ENCODE measurements at regions of chr15 and their contacts with region 1.

Region 1: GRCh38 chr15:60237421-60237820 is 160.4 kb downstream of the ANXA2 start:
- DNase-seq: no peak
- ATAC-seq: no peak
- H3K4me3 ChIP-seq: no peak overlapping the region
- H3K4me3 Mint-ChIP-seq: no peak overlapping the region
- H3K27ac ChIP-seq: no peak overlapping the region
- H3K27ac Mint-ChIP-seq: no peak overlapping the region
- H3K4me1 ChIP-seq: peaks cover 0 to 3% of the 10 kb centered on the region in 2 experiments
- H3K4me1 Mint-ChIP-seq: peaks cover 0 to 6% (median 5%) of the 10 kb centered on the region in 3 donors
- H3K27me3 ChIP-seq: peaks cover 0 to 10% of the 10 kb centered on the region in 2 experiments
- H3K27me3 Mint-ChIP-seq: peaks cover 50 to 53% of the 10 kb centered on the region in 2 donors

Region 2: GRCh38 chr15:58777107-58777506 is 1460.3 kb before region 1 on chr15:
- CTCF ChIA-PET with region 1: no interaction called
- POLR2A ChIA-PET with region 1: interaction called in 1 of 2 experiments, 14 read pairs
- DNase-seq: no peak
- ATAC-seq: no peak
- H3K4me3 ChIP-seq: no peak overlapping the region
- H3K4me3 Mint-ChIP-seq: no peak overlapping the region
- H3K27ac ChIP-seq: no peak overlapping the region
- H3K27ac Mint-ChIP-seq: no peak overlapping the region
- H3K4me1 ChIP-seq: peaks cover 16 to 26% of the 10 kb centered on the region in 2 experiments
- H3K4me1 Mint-ChIP-seq: peaks cover 0 to 13% (median 11%) of the 10 kb centered on the region in 3 donors
- H3K27me3 ChIP-seq: no peaks in the 10 kb centered on the region
- H3K27me3 Mint-ChIP-seq: no peaks in the 10 kb centered on the region